ENCODE measurements at regions of chr12 and their contacts with region 1.

Region 1: GRCh38 chr12:115943630-115944391 is 333.7 kb downstream of the MED13L start:
- DNase-seq: no peak
- ATAC-seq: no peak
- H3K4me3 Mint-ChIP-seq: no peak overlapping the region
- H3K27ac Mint-ChIP-seq: no peak overlapping the region
- H3K4me1 Mint-ChIP-seq: no peaks in the 10 kb centered on the region
- H3K27me3 Mint-ChIP-seq: peaks cover 9% of the 10 kb centered on the region

Region 2: DNA sequence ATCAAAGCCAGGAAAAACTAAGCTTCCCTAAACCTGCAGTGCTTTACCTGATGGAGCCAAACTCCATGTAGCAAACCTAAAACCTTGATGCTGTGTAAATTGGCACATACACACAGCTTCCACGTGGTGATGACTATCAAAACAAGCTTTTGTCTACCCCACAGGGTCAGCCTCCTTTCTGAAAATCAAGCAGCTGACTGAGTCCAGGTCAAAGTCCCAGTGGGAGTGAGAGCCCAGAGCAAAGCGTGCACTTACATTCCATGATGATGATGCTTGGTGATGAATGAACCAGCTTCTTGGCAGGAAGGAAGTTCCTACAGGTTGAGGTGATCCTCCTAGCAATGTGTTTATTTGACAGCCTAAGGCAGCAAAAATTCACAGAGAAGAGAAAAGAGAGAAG is 629.9 kb before region 1 on chr12:
- CTCF ChIA-PET with region 1: no interaction called
- POLR2A ChIA-PET with region 1: no interaction called
- intact Hi-C with region 1: no loop called
- DNase-seq: no peak
- ATAC-seq: no peak
- H3K4me3 Mint-ChIP-seq: no peak overlapping the region
- H3K27ac Mint-ChIP-seq: no peak overlapping the region
- H3K4me1 Mint-ChIP-seq: no peaks in the 10 kb centered on the region
- H3K27me3 Mint-ChIP-seq: no peaks in the 10 kb centered on the region

Region 3: GRCh38 chr12:115990241-115990640 is 46.4 kb after region 1 on chr12:
- CTCF ChIA-PET with region 1: no interaction called
- POLR2A ChIA-PET with region 1: no interaction called
- intact Hi-C with region 1: loop called in 1 of 2 experiments (anchors 5 kb)
- DNase-seq: no peak
- ATAC-seq: no peak
- H3K4me3 Mint-ChIP-seq: no peak overlapping the region
- H3K27ac Mint-ChIP-seq: no peak overlapping the region
- H3K4me1 Mint-ChIP-seq: peaks cover 26% of the 10 kb centered on the region
- H3K27me3 Mint-ChIP-seq: no peaks in the 10 kb centered on the region

Measured in activated CD4-positive, alpha-beta T cell treated with anti-CD3 and anti-CD28 coated beads for 36 hours (primary cell).